ENCODE measurements at regions of chr15 and their contacts with region 1.

Region 1: GRCh38 chr15:64010719-64011118 is 35.6 kb downstream of the DAPK2 start:
- DNase-seq: peak; percentile 93
- ATAC-seq: peak; percentile 97
- H3K4me3 ChIP-seq: peak overlapping the region in 2 of 5 experiments; percentile 8 to 47
- H3K4me3 Mint-ChIP-seq: peak overlapping the region; percentile 87
- H3K27ac ChIP-seq: peak overlapping the region; percentile 63 to 77
- H3K27ac Mint-ChIP-seq: peak overlapping the region; percentile 97
- H3K4me1 ChIP-seq: peaks cover 27 to 36% of the 10 kb centered on the region in 2 donors
- H3K4me1 Mint-ChIP-seq: peaks cover 43% of the 10 kb centered on the region
- H3K27me3 ChIP-seq: no peaks in the 10 kb centered on the region
- H3K27me3 Mint-ChIP-seq: no peaks in the 10 kb centered on the region
- CTCF ChIP-seq: peak; percentile 51

Region 2: GRCh38 chr15:63826528-63826927 is 184.2 kb before region 1 on chr15:
- CTCF ChIA-PET with region 1: interaction called, 24 read pairs
- POLR2A ChIA-PET with region 1: no interaction called
- intact Hi-C with region 1: no loop called
- DNase-seq: peak; percentile 62
- ATAC-seq: peak; percentile 31
- H3K4me3 ChIP-seq: no peak overlapping the region
- H3K4me3 Mint-ChIP-seq: no peak overlapping the region
- H3K27ac ChIP-seq: no peak overlapping the region
- H3K27ac Mint-ChIP-seq: peak overlapping the region; percentile 73
- H3K4me1 ChIP-seq: peaks cover 4 to 13% of the 10 kb centered on the region in 2 donors
- H3K4me1 Mint-ChIP-seq: peaks cover 58% of the 10 kb centered on the region
- H3K27me3 ChIP-seq: no peaks in the 10 kb centered on the region
- H3K27me3 Mint-ChIP-seq: no peaks in the 10 kb centered on the region
- CTCF ChIP-seq: peak; percentile 56

Region 3: DNA sequence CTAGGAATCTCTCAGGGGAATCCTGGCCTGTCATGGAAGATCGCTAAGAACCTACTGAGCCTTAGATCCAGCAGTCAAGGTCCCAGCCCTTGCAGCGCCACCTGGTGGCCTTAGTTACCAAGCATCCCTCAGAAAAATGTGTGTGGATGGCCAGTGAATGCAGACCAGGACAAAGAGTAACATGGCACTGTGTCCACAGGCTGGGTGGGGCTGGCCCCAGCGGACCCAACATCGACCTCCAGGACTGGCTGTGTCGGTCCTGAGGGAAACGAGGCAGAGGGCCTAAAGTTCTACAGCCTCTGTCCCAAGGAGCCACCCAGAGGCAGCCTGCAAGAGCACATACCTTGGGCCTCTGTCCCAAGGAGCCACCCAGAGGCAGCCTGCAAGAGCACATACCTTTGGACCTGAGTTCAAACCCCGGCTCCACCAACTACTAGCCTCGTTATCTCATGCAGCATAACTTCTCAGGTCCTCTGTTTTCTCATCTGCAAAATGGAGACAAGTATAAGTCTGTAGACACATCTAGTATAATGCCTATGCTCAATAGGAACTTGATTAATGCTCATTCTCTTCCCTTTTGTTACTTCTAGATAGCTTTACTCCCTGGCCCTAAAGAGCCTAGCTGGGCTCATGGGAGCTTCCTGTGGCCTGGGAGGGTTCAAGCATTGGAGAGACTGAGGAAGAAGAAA is 119.5 kb before region 1 on chr15:
- CTCF ChIA-PET with region 1: interaction called, 27 read pairs
- POLR2A ChIA-PET with region 1: interaction called, 4 read pairs
- intact Hi-C with region 1: loop called (anchors 5 kb)
- DNase-seq: peak; percentile 84
- ATAC-seq: peak; percentile 67
- H3K4me3 ChIP-seq: no peak overlapping the region
- H3K4me3 Mint-ChIP-seq: no peak overlapping the region
- H3K27ac ChIP-seq: no peak overlapping the region
- H3K27ac Mint-ChIP-seq: peak overlapping the region; percentile 37
- H3K4me1 ChIP-seq: peaks cover 30 to 35% of the 10 kb centered on the region in 2 donors
- H3K4me1 Mint-ChIP-seq: peaks cover 37% of the 10 kb centered on the region
- H3K27me3 ChIP-seq: no peaks in the 10 kb centered on the region
- H3K27me3 Mint-ChIP-seq: no peaks in the 10 kb centered on the region
- CTCF ChIP-seq: peak; percentile 95

Region 4: GRCh38 chr15:63978511-63979261 is 32.0 kb before region 1 on chr15:
- CTCF ChIA-PET with region 1: interaction called, 13 read pairs
- POLR2A ChIA-PET with region 1: no interaction called
- intact Hi-C with region 1: no loop called
- DNase-seq: no peak
- ATAC-seq: no peak
- H3K4me3 ChIP-seq: no peak overlapping the region
- H3K4me3 Mint-ChIP-seq: no peak overlapping the region
- H3K27ac ChIP-seq: no peak overlapping the region
- H3K27ac Mint-ChIP-seq: no peak overlapping the region
- H3K4me1 ChIP-seq: peaks cover 0 to 5% of the 10 kb centered on the region in 2 donors
- H3K4me1 Mint-ChIP-seq: peaks cover 10% of the 10 kb centered on the region
- H3K27me3 ChIP-seq: no peaks in the 10 kb centered on the region
- H3K27me3 Mint-ChIP-seq: no peaks in the 10 kb centered on the region
- CTCF ChIP-seq: no peak

Region 5: DNA sequence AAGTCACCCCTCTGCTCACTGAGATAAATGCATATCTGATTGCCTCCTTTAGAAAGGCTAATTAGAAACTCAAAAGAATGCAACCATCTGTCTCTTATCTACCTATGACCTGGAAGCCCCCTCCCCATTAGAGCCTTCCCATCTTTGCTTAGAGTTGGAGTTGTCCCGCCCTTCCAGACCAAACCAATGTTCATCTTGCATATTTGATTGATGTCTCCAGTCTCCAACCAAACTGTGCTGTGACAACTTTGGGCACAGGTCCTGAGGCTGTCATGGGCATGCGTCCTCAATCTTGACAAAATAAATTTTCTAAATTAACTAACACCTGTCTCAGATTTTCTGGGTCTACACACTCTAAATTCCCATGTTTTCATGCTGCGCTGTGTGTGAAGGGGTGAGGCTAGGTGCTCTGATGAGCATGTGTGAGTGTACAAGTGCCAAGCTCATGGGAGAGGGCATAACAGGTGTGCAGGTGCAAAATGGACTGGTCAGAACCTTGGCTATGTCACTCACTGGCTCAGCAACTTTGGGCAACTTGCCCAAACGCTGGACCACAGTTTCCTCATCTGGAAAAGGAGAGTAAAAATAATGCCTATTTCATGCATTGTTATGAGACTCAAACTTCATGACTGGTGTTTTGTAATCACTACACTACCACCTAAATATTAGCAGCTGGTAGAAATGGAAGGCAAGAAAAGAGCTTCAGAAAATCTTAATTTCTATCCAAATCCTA is 28.3 kb after region 1 on chr15:
- CTCF ChIA-PET with region 1: interaction called, 79 read pairs
- POLR2A ChIA-PET with region 1: no interaction called
- intact Hi-C with region 1: loop called (anchors 2 kb)
- DNase-seq: no peak
- ATAC-seq: no peak
- H3K4me3 ChIP-seq: no peak overlapping the region
- H3K4me3 Mint-ChIP-seq: no peak overlapping the region
- H3K27ac ChIP-seq: no peak overlapping the region
- H3K27ac Mint-ChIP-seq: no peak overlapping the region
- H3K4me1 ChIP-seq: peaks cover 5 to 15% of the 10 kb centered on the region in 2 donors
- H3K4me1 Mint-ChIP-seq: peaks cover 22% of the 10 kb centered on the region
- H3K27me3 ChIP-seq: no peaks in the 10 kb centered on the region
- H3K27me3 Mint-ChIP-seq: no peaks in the 10 kb centered on the region
- CTCF ChIP-seq: no peak

Measured in B cell (primary cell).